ENCODE measurements at regions of chr10 and their contacts with region 1.

Region 1: DNA sequence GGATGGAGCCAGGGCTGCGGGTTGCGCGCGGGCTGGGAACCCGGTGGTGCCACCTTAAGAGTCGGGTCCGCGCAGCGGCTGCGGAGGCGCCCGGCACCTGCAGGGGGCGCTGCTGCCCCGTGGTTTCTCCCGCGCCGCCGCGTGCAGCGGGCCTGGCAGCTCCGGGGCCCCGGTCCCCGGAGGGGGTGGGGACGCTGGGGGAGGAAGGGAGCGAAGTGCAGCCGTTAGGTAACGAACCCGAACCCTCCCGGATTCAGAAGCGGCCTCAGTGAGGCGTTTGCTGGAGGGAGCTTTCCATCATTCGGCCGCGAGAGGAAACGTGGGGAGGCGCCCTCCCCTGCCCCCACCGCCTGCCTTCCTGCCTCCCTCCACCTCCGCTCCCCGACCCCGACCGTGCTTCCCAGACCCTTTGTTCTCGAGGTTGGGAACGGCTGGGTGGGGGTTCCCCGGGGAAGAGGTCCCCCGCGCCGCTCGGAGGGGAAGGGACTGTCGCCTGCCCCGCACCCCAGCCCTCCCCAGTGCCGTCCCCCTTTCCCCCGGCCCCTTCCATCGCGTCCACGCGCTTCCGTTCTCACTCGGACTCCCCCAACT is 29.6 kb downstream of the SKIDA1 start:
- DNase-seq: peak; percentile 77
- ATAC-seq: peak; percentile 80
- H3K4me3 ChIP-seq: peak overlapping the region; percentile 91
- H3K27ac ChIP-seq: peak overlapping the region; percentile 81
- H3K4me1 ChIP-seq: peaks cover 3% of the 10 kb centered on the region; the same call in 1 of the 2 replicates
- H3K27me3 ChIP-seq: peaks cover 5% of the 10 kb centered on the region
- CTCF ChIP-seq: peak; percentile 98
- POLR2A ChIP-seq: no peak
- RAD21 ChIP-seq: peak; percentile 95

Region 2: GRCh38 chr10:21278491-21279239 is 217.2 kb before region 1 on chr10:
- CTCF ChIA-PET with region 1: interaction called, 12 read pairs
- POLR2A ChIA-PET with region 1: no interaction called
- dilution Hi-C with region 1: no loop called
- in situ Hi-C with region 1: no loop called
- intact Hi-C with region 1: loop called (anchors 1 kb)
- DNase-seq: peak; percentile 90
- ATAC-seq: peak; percentile 99
- H3K4me3 ChIP-seq: no peak overlapping the region
- H3K27ac ChIP-seq: no peak overlapping the region
- H3K4me1 ChIP-seq: peaks cover 2% of the 10 kb centered on the region; the same call in 1 of the 2 replicates
- H3K27me3 ChIP-seq: no peaks in the 10 kb centered on the region; the same call in 1 of the 2 replicates
- CTCF ChIP-seq: peak; percentile 89
- POLR2A ChIP-seq: no peak
- RAD21 ChIP-seq: peak; percentile 97

Region 3: GRCh38 chr10:21372651-21373410 is 123.0 kb before region 1 on chr10:
- CTCF ChIA-PET with region 1: no interaction called
- POLR2A ChIA-PET with region 1: no interaction called
- dilution Hi-C with region 1: no loop called
- in situ Hi-C with region 1: no loop called
- intact Hi-C with region 1: no loop called
- DNase-seq: peak; percentile 92
- ATAC-seq: peak; percentile 99
- H3K4me3 ChIP-seq: peak overlapping the region; percentile 5; the same call in 1 of the 2 replicates
- H3K27ac ChIP-seq: peak overlapping the region; percentile 59
- H3K4me1 ChIP-seq: peaks cover 11% of the 10 kb centered on the region
- H3K27me3 ChIP-seq: no peaks in the 10 kb centered on the region
- CTCF ChIP-seq: no peak
- POLR2A ChIP-seq: no peak
- RAD21 ChIP-seq: no peak; the same call in 1 of the 2 replicates

Region 4: GRCh38 chr10:21533467-21534279 is 37.8 kb after region 1 on chr10 and contains the start of gene MLLT10:
- CTCF ChIA-PET with region 1: no interaction called
- POLR2A ChIA-PET with region 1: no interaction called
- dilution Hi-C with region 1: no loop called
- in situ Hi-C with region 1: loop called (anchors 5 kb)
- intact Hi-C with region 1: no loop called
- DNase-seq: peak; percentile 94
- ATAC-seq: peak; percentile 94
- H3K4me3 ChIP-seq: peak within 1 kb of the TSS; percentile 89
- H3K27ac ChIP-seq: peak within 1 kb of the TSS; percentile 97
- H3K4me1 ChIP-seq: 0 out of 2 replicates have a peak, but pooled peaks cover 2% of the 10 kb centered on the region
- H3K27me3 ChIP-seq: no peaks in the 10 kb centered on the region
- CTCF ChIP-seq: peak; percentile 28
- POLR2A ChIP-seq: peak; percentile 59; the same call in 1 of the 2 replicates
- RAD21 ChIP-seq: no peak; the same call in 1 of the 2 replicates
- total RNA-seq, gene MLLT10: 29.0 and 31.9 TPM in 2 replicates

Region 5: DNA sequence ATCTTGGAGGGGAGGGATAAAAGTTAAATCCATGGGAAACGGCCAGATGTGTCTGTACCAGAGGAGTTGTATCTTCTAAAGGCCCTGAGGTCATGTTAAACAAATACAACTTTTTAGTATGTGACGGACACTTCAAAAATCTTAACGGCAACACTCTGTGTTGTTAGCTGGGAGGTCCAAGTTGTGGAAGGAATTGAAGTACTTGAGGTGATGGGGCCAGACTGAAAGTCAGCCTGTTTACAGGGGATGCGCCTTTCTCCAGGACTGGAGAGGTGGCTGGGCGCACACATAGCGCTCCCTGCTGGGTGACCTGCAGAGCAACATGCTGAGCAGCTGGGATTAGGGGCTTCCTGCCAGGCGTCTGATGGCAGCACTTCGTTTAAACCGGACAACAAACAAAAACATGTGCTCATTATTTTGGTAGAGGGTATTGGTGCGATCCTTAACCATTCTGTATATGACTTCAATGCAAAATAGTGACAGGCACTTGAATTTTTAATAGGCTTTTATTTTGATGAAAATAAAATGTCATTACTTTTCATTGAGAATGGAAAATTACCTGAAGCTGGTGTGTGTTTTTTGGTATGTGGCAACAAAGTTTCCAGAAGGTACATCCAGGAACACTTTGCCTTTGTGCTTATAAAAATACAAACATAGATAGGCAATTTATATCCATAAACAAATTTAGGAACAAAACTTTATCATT is 236.4 kb after region 1 on chr10:
- CTCF ChIA-PET with region 1: interaction called, 19 read pairs
- POLR2A ChIA-PET with region 1: no interaction called
- dilution Hi-C with region 1: no loop called
- in situ Hi-C with region 1: loop called (anchors 5 kb)
- intact Hi-C with region 1: loop called (anchors 1 kb)
- DNase-seq: peak; percentile 82
- ATAC-seq: peak; percentile 95
- H3K4me3 ChIP-seq: no peak overlapping the region
- H3K27ac ChIP-seq: no peak overlapping the region
- H3K4me1 ChIP-seq: peaks cover 4% of the 10 kb centered on the region
- H3K27me3 ChIP-seq: no peaks in the 10 kb centered on the region
- CTCF ChIP-seq: peak; percentile 93
- POLR2A ChIP-seq: no peak
- RAD21 ChIP-seq: peak; percentile 93

Region 6: DNA sequence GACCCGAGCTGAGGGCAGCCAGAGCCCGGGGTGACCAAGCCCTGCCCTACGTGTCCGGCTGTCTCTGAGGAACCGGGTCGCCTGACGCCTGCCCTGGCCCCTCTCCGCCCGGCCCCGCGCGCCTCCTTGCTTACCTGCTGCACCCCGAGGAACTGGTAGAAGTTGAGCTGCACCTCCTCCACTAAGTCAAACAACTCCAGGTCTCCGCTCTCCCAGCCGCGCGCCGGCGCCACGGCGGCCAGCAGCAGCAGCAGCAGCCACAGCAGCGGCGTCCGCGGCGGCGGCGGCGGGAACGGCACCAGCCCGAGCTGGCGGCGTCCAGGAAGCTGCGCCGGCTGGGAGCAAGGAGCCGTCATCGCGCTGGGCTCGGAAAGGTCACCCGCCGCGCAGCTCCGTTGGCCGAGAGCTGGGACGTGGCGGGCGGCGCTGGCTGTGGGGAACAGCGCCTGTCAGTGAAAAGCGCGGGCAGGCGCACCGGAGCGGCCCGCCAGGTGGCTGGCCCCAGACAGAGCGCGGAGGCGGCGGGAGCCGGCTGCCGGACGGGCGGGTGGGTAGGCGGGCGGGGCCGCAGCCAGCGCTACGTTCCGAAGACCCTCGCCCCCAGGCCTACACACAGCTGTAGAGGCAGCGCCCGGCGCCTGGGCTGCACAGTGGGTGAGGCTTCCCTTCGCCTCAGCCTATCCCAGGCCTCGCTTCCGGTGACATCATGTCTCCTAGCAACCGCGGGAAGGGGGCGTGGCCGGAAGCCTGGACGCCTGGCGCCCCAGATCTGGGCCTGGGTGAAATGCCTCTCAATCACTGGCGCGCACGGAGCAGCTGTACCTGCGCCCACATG is 507.4 kb after region 1 on chr10 and contains the start of gene DNAJC1:
- CTCF ChIA-PET with region 1: no interaction called
- POLR2A ChIA-PET with region 1: no interaction called
- dilution Hi-C with region 1: no loop called
- in situ Hi-C with region 1: no loop called
- intact Hi-C with region 1: loop called (anchors 5 kb)
- DNase-seq: peak; percentile 90
- ATAC-seq: peak; percentile 99
- H3K4me3 ChIP-seq: peak within 1 kb of the TSS; percentile 69
- H3K27ac ChIP-seq: peak within 1 kb of the TSS; percentile 29
- H3K4me1 ChIP-seq: no peaks in the 10 kb centered on the region; the same call in 1 of the 2 replicates
- H3K27me3 ChIP-seq: no peaks in the 10 kb centered on the region; the same call in none of the 2 replicates
- CTCF ChIP-seq: no peak; the same call in 1 of the 2 replicates
- POLR2A ChIP-seq: peak; percentile 62
- RAD21 ChIP-seq: no peak
- total RNA-seq, gene DNAJC1: 13.3 and 22.8 TPM in 2 replicates